Activated CD8-positive, alpha-beta T cell treated with anti-CD3 and anti-CD28 coated beads, Interleukin-2, amount 10 ng/mL, durations not matched to agents 7 days and 5 days (primary cell): ENCODE measurements at regions of chr6 and their contacts with region 1.

Region 1: GRCh38 chr6:30616811-30617564 is at the start of gene PPP1R10:
- DNase-seq: peak; percentile 100
- ATAC-seq: peak; percentile 78
- H3K4me3 Mint-ChIP-seq: peak within 1 kb of the TSS; percentile 93
- H3K27ac Mint-ChIP-seq: peak within 1 kb of the TSS; percentile 98
- H3K4me1 Mint-ChIP-seq: peaks cover 38% of the 10 kb centered on the region
- H3K27me3 Mint-ChIP-seq: peaks cover 2% of the 10 kb centered on the region
- total RNA-seq, gene PPP1R10: 92.8 to 99.7 TPM

Region 2: GRCh38 chr6:30489081-30490025 is 127.6 kb before region 1 on chr6 and contains the start of gene HLA-E:
- CTCF ChIA-PET with region 1: interaction called, 24 read pairs
- POLR2A ChIA-PET with region 1: interaction called, 26 read pairs
- DNase-seq: peak; percentile 96
- ATAC-seq: peak; percentile 79
- H3K4me3 Mint-ChIP-seq: peak within 1 kb of the TSS; percentile 99
- H3K27ac Mint-ChIP-seq: peak within 1 kb of the TSS; percentile 96
- H3K4me1 Mint-ChIP-seq: peaks cover 45% of the 10 kb centered on the region
- H3K27me3 Mint-ChIP-seq: peaks cover 5% of the 10 kb centered on the region
- total RNA-seq, gene HLA-E: 523 to 536 TPM

Region 3: DNA sequence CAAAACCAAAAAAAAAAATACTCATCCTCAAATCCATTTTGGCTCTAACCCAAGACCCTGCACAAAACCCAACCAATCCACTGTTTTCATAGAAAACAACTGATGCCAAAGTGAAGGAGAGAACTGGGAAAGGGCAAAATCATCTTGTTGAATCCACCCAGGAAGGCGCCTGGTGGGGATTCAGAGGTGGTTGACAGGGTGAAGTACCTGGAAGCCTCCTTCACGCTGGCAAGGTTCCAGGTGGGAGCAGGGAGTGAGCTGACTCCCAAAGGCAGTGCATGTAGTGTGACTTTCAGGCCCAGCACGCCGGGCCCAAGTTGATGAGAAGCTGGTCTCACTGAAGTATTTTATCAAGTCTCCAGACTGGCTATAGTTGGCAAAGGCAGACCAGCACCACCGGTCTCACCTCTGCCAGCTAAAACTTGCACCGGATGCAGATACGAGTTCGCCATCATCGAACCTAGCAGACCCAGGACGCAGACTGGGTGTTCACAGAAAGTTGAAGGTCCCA is 16.5 kb before region 1 on chr6:
- CTCF ChIA-PET with region 1: interaction called, 30 read pairs
- POLR2A ChIA-PET with region 1: interaction called, 60 read pairs
- DNase-seq: no peak
- ATAC-seq: no peak
- H3K4me3 Mint-ChIP-seq: no peak overlapping the region
- H3K27ac Mint-ChIP-seq: no peak overlapping the region
- H3K4me1 Mint-ChIP-seq: peaks cover 18% of the 10 kb centered on the region
- H3K27me3 Mint-ChIP-seq: no peaks in the 10 kb centered on the region

Region 4: GRCh38 chr6:30672445-30673253 is 55.7 kb after region 1 on chr6 and contains the start of gene DHX16:
- CTCF ChIA-PET with region 1: interaction called, 10 read pairs
- POLR2A ChIA-PET with region 1: interaction called, 14 read pairs
- DNase-seq: peak; percentile 95
- ATAC-seq: peak; percentile 86
- H3K4me3 Mint-ChIP-seq: peak within 1 kb of the TSS; percentile 93
- H3K27ac Mint-ChIP-seq: peak within 1 kb of the TSS; percentile 78
- H3K4me1 Mint-ChIP-seq: peaks cover 39% of the 10 kb centered on the region
- H3K27me3 Mint-ChIP-seq: no peaks in the 10 kb centered on the region
- total RNA-seq, gene DHX16: 38.5 to 41.0 TPM

Region 5: GRCh38 chr6:30711758-30712380 is 94.9 kb after region 1 on chr6:
- CTCF ChIA-PET with region 1: interaction called, 3 read pairs
- POLR2A ChIA-PET with region 1: interaction called, 23 read pairs
- DNase-seq: peak; percentile 57
- ATAC-seq: peak; percentile 83
- H3K4me3 Mint-ChIP-seq: peak overlapping the region; percentile 63
- H3K27ac Mint-ChIP-seq: peak overlapping the region; percentile 81
- H3K4me1 Mint-ChIP-seq: peaks cover 61% of the 10 kb centered on the region
- H3K27me3 Mint-ChIP-seq: no peaks in the 10 kb centered on the region